IMR-90 (cell line): ENCODE measurements at regions of chr2 and their contacts with region 1.

Region 1: DNA sequence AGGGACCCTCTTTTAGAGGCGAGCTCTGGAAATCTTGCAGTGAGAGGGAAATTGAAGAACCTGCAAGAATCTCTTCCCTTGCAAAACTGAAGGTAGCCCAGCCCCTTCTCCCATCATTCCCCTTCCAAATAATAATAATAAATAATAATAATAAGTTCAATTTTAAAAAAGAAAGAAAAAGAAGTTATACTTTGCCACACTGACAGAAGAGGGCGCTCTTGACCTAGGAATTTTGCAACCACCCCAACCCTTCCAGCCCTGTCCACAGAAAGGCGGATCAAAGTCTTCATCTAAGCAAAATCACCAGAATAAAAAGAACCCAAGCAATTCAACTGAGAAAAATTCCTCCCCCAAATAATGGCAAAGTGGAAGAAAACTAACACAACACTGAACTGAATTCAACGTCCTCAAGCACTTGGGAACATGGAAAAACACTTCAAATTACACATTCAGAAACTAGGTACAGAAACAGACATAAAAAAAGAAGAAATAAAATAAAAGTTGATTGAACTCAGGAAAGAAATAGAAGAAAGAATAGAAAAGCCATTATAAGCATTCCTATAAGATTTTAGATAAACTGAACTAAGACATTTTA is 98.9 kb upstream of the GLS start:
- DNase-seq: peak; percentile 76
- ATAC-seq: peak; percentile 83
- H3K4me3 ChIP-seq: no peak overlapping the region
- H3K27ac ChIP-seq: no peak overlapping the region
- H3K4me1 ChIP-seq: 0 out of 2 replicates have a peak, but pooled peaks cover 2% of the 10 kb centered on the region
- H3K27me3 ChIP-seq: peaks cover 6% of the 10 kb centered on the region; the same call in 1 of the 2 replicates
- CTCF ChIP-seq: peak; percentile 76
- POLR2A ChIP-seq: no peak
- RAD21 ChIP-seq: peak; percentile 92

Region 2: GRCh38 chr2:190627448-190628412 is 154.0 kb before region 1 on chr2:
- CTCF ChIA-PET with region 1: no interaction called
- POLR2A ChIA-PET with region 1: no interaction called
- dilution Hi-C with region 1: no loop called
- in situ Hi-C with region 1: no loop called
- intact Hi-C with region 1: no loop called
- DNase-seq: no peak
- ATAC-seq: peak; percentile 87
- H3K4me3 ChIP-seq: peak overlapping the region; percentile 53
- H3K27ac ChIP-seq: no peak overlapping the region
- H3K4me1 ChIP-seq: no peaks in the 10 kb centered on the region
- H3K27me3 ChIP-seq: no peaks in the 10 kb centered on the region; the same call in 1 of the 2 replicates
- CTCF ChIP-seq: no peak
- POLR2A ChIP-seq: no peak
- RAD21 ChIP-seq: no peak

Region 3: DNA sequence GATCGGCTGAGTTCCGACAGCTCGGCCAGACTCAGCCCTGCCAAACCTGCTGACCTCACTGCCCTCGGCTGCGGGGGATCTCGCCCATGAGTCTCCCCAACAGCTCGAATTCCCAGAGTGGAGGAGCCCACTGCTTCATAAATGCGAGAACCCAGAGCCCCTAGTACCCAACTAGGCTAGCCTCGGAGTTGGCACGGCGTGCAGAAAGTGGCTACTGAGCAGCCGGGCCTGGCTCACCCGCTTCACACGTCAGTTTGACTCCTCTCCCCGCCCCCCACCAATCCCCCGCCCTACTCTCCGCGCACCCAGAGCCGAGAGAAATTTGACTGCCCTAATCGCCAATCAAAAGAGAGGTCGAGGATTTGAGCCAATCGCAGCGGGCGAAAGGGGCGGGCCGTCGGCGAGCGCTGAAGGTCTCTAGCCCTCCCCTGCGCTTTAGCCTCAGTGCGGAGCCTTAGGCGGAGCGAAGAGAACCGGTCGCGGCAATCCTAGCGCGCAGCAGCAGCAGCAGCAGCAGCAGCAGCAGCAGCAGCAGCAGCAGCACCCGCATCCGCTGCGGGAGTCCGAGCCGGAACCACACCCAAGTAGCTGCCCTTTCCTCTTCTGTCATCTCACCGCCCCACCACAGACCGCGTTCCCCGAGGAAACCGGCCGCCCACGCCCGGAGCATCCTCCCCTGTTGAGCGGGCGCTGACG is 98.8 kb after region 1 on chr2 and contains the start of gene GLS:
- CTCF ChIA-PET with region 1: no interaction called
- POLR2A ChIA-PET with region 1: no interaction called
- dilution Hi-C with region 1: no loop called
- in situ Hi-C with region 1: no loop called
- intact Hi-C with region 1: loop called (anchors 2 kb)
- DNase-seq: peak; percentile 96
- ATAC-seq: peak; percentile 90
- H3K4me3 ChIP-seq: peak within 1 kb of the TSS; percentile 66
- H3K27ac ChIP-seq: peak within 1 kb of the TSS; percentile 97
- H3K4me1 ChIP-seq: peaks cover 3% of the 10 kb centered on the region; the same call in 1 of the 2 replicates
- H3K27me3 ChIP-seq: no peaks in the 10 kb centered on the region
- CTCF ChIP-seq: no peak
- POLR2A ChIP-seq: peak; percentile 99
- RAD21 ChIP-seq: no peak
- total RNA-seq, gene GLS: 130 and 279 TPM in 2 replicates

Region 4: DNA sequence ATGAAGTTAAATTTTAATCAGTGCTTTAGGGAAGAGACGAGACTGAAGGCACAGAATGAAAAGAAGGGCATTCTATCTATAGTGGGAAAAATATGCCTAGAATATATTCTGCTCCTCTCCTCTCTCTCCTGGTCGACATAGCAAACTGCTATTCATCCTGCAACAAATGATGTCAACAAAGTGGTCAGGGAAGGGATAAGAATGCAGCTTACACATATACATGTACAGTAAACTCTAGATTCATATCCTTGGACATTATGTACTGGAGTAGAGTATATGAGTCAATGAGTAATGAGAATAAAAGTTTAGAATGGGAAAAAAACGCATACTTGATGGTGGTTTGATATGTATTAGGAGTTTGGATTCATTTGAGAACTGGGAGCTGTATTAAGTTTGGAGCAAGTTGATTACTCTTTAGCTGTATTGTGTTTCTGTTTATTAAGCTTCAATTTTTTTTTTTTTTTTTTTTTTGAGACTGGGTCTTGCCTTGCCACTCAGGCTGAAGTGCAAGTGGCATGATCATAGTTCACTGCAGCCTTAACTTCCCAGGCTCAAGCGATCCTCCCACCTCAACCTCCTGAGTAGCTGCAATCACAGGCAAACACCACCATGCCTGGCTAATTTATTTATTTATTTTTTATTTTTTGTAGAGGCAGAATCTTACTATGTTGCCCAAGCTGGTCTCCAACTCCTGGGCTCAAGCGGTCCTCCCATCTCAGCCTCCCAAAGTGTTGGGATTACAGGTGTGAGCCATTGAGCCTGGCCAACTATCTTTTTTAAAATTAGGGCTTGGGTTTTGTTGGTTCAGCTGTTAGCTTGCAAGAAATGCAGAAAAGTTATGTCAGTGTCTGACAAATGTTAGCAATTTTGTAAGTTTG is 178.4 kb after region 1 on chr2:
- CTCF ChIA-PET with region 1: no interaction called
- POLR2A ChIA-PET with region 1: no interaction called
- dilution Hi-C with region 1: no loop called
- in situ Hi-C with region 1: loop called (anchors 10 kb)
- intact Hi-C with region 1: no loop called
- DNase-seq: peak; percentile 71
- ATAC-seq: peak; percentile 64
- H3K4me3 ChIP-seq: no peak overlapping the region
- H3K27ac ChIP-seq: no peak overlapping the region
- H3K4me1 ChIP-seq: no peaks in the 10 kb centered on the region
- H3K27me3 ChIP-seq: no peaks in the 10 kb centered on the region
- CTCF ChIP-seq: no peak; the same call in 1 of the 2 replicates
- POLR2A ChIP-seq: no peak
- RAD21 ChIP-seq: no peak

Region 5: GRCh38 chr2:191032588-191033429 is 251.1 kb after region 1 on chr2:
- CTCF ChIA-PET with region 1: no interaction called
- POLR2A ChIA-PET with region 1: no interaction called
- dilution Hi-C with region 1: no loop called
- in situ Hi-C with region 1: no loop called
- intact Hi-C with region 1: loop called (anchors 2 kb)
- DNase-seq: no peak
- ATAC-seq: peak; percentile 32
- H3K4me3 ChIP-seq: no peak overlapping the region
- H3K27ac ChIP-seq: no peak overlapping the region
- H3K4me1 ChIP-seq: peaks cover 6% of the 10 kb centered on the region
- H3K27me3 ChIP-seq: no peaks in the 10 kb centered on the region
- CTCF ChIP-seq: no peak
- POLR2A ChIP-seq: no peak
- RAD21 ChIP-seq: no peak

Region 6: GRCh38 chr2:191150600-191151330 is 369.1 kb after region 1 on chr2 and contains the start of gene STAT4:
- CTCF ChIA-PET with region 1: no interaction called
- POLR2A ChIA-PET with region 1: no interaction called
- dilution Hi-C with region 1: no loop called
- in situ Hi-C with region 1: loop called (anchors 25 kb)
- intact Hi-C with region 1: loop called (anchors 2 kb)
- DNase-seq: peak; percentile 47
- ATAC-seq: peak; percentile 48
- H3K4me3 ChIP-seq: peak within 1 kb of the TSS; percentile 41
- H3K27ac ChIP-seq: no peak within 1 kb of the TSS
- H3K4me1 ChIP-seq: no peaks in the 10 kb centered on the region
- H3K27me3 ChIP-seq: peaks cover 1% of the 10 kb centered on the region; the same call in 1 of the 2 replicates
- CTCF ChIP-seq: no peak
- POLR2A ChIP-seq: no peak
- RAD21 ChIP-seq: no peak
- total RNA-seq, gene STAT4: 0.28 and 0.36 TPM in 2 replicates